B cell (primary cell): ENCODE measurements at regions of chr1 and their contacts with region 1.

Region 1: GRCh38 chr1:16440470-16441281 is at the start of gene NECAP2:
- DNase-seq: peak; percentile 94
- ATAC-seq: peak; percentile 89
- H3K4me3 ChIP-seq: peak within 1 kb of the TSS; percentile 34 to 100 (median 95)
- H3K4me3 Mint-ChIP-seq: peak within 1 kb of the TSS; percentile 93
- H3K27ac ChIP-seq: peak within 1 kb of the TSS; percentile 97 to 98
- H3K27ac Mint-ChIP-seq: peak within 1 kb of the TSS; percentile 91
- H3K4me1 ChIP-seq: peaks cover 16 to 29% of the 10 kb centered on the region in 2 donors
- H3K4me1 Mint-ChIP-seq: peaks cover 28% of the 10 kb centered on the region
- H3K27me3 ChIP-seq: no peaks in the 10 kb centered on the region
- H3K27me3 Mint-ChIP-seq: no peaks in the 10 kb centered on the region
- CTCF ChIP-seq: peak; percentile 92
- total RNA-seq, gene NECAP2: 77.3 and 78.5 TPM in 2 replicates

Region 2: DNA sequence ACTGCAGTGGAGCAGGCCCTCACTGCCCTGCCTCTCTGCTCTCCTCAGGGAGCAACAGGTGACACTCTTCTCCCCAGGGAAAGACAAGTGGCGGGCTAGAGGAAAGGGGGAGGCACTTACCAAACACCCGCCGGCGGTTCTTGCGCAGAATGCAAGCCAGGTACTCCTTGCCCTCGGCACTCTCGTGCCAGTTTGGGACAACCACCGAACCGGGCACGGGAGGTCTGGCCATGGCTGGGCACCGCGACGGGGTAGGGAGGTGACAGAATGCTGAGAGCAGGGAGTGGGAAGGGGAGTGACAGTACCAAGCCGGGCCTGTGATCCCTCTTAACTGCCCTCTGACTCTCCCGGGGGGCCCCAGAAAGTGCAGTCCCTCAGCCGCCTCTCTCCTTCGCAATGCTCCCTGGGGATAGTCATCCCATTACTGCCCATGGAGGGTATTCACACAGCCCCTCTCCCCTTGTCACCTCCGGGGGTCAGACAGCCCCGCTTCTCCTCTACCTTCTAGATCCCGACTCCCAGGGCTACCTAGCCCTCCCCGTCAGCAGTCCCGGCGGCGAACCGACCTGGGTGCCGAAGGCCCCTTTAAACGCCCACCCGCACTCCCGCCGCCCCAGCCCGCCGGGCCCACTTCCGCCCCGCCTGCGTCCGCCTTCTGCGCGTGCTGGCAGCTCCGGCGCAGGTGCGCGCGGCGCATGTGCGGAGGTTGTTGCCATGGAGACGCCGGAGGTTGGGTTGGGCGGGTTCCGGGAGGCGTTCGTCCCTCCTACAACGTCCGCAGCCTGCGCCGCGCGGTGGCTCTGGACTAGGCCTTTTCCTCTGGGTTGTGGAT is 203.9 kb before region 1 on chr1 and contains the start of gene CPLANE2:
- CTCF ChIA-PET with region 1: no interaction called
- POLR2A ChIA-PET with region 1: no interaction called
- intact Hi-C with region 1: loop called (anchors 2 kb)
- DNase-seq: peak; percentile 97
- ATAC-seq: peak; percentile 79
- H3K4me3 ChIP-seq: peak within 1 kb of the TSS; percentile 55 to 98 (median 76)
- H3K4me3 Mint-ChIP-seq: peak within 1 kb of the TSS; percentile 85
- H3K27ac ChIP-seq: peak within 1 kb of the TSS; percentile 82 to 92
- H3K27ac Mint-ChIP-seq: peak within 1 kb of the TSS; percentile 96
- H3K4me1 ChIP-seq: peaks cover 12 to 17% of the 10 kb centered on the region in 2 donors
- H3K4me1 Mint-ChIP-seq: peaks cover 16% of the 10 kb centered on the region
- H3K27me3 ChIP-seq: no peaks in the 10 kb centered on the region
- H3K27me3 Mint-ChIP-seq: no peaks in the 10 kb centered on the region
- CTCF ChIP-seq: no peak
- total RNA-seq, gene CPLANE2: 11.1 and 14.3 TPM in 2 replicates

Region 3: DNA sequence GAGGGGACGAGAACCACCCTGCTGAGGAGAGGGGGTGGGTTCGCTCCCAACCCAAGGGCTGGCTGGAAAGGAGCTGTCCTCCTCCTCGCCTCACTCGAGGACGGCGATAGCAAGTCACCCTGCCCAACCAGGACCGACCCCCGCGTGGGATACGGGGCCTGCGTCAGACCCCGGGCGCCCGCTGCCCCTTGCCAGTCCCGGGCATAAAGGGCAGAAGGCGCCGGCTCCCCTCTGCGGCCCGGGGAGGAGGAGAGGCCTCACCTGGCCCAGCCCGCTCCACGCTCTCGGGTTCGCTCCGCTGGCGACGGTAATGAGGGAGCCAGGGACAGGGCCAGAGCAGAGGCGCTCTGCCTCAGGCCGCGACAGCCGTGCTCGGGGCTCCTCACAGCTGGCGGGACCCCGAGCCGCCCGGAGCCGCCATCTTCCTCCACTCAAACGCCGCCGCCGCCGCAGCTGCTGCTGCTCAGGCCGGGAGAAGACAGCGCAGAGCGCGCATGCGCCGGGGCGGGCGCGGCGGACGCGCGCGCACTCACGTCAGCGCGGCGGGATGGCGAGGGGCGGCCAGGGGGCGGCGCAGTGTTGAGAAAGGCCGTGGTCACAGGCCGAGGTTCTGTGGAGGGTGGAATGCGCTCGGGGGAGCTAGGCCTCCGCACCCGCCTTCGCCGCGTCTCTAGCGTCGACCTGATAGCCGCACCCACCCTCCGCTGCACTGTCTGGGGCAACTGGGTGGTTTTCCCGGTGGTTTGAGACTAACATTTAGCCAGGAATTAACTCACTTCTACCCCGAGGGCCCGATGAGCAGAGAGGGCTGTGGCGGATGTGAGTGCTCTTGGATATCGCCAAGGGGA is 88.5 kb before region 1 on chr1 and contains the start of gene FBXO42:
- CTCF ChIA-PET with region 1: interaction called, 7 read pairs
- POLR2A ChIA-PET with region 1: no interaction called
- intact Hi-C with region 1: loop called (anchors 5 kb)
- DNase-seq: peak; percentile 96
- ATAC-seq: peak; percentile 93
- H3K4me3 ChIP-seq: peak within 1 kb of the TSS; percentile 66 to 99 (median 81)
- H3K4me3 Mint-ChIP-seq: peak within 1 kb of the TSS; percentile 84
- H3K27ac ChIP-seq: peak within 1 kb of the TSS; percentile 87 to 90
- H3K27ac Mint-ChIP-seq: peak within 1 kb of the TSS; percentile 92
- H3K4me1 ChIP-seq: peaks cover 19 to 30% of the 10 kb centered on the region in 2 donors
- H3K4me1 Mint-ChIP-seq: peaks cover 23% of the 10 kb centered on the region
- H3K27me3 ChIP-seq: no peaks in the 10 kb centered on the region
- H3K27me3 Mint-ChIP-seq: no peaks in the 10 kb centered on the region
- CTCF ChIP-seq: peak; percentile 54
- total RNA-seq, gene FBXO42: 25.4 and 33.1 TPM in 2 replicates

Region 4: DNA sequence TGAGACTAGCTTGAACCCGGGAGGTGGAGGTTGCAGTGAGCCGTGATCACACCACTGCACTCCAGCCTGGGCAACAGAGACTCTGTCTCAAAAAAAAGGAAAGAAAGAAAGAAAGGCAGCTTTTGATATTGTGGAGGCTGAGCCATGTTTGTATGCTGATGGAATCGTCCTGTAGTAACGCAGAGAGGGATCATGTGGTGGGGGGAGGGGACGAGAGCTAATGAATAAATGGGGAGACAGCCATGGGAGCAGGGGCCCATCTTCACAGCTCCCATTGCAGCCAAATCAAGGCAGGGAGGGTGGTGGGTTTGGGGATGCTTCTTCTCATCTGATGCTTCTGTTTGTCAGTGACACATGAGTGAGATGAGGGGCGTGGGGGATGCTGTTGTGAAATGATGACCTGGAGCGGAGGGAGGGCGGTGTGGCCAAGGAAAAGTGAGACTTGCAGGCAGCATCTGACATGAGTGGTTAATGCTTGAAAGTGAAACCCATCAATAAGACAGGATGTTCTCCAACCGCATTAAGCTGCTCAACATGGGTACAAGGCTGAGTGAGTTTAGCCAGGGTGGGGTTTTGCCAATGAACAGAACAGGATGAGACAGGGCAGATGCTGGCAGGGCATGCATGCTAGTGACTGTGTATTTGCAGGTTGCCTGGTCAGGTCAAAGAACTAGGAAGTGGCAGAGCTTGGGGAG is 20.1 kb before region 1 on chr1:
- CTCF ChIA-PET with region 1: interaction called, 9 read pairs
- POLR2A ChIA-PET with region 1: interaction called, 3 read pairs
- intact Hi-C with region 1: loop called (anchors 1 kb)
- DNase-seq: peak; percentile 78
- ATAC-seq: peak; percentile 92
- H3K4me3 ChIP-seq: peak overlapping the region in 2 of 5 experiments; percentile 9 to 44
- H3K4me3 Mint-ChIP-seq: peak overlapping the region; percentile 57
- H3K27ac ChIP-seq: peak overlapping the region; percentile 25 to 74
- H3K27ac Mint-ChIP-seq: peak overlapping the region; percentile 91
- H3K4me1 ChIP-seq: peaks cover 19 to 26% of the 10 kb centered on the region in 2 donors
- H3K4me1 Mint-ChIP-seq: peaks cover 26% of the 10 kb centered on the region
- H3K27me3 ChIP-seq: no peaks in the 10 kb centered on the region
- H3K27me3 Mint-ChIP-seq: no peaks in the 10 kb centered on the region
- CTCF ChIP-seq: no peak

Region 5: GRCh38 chr1:16498573-16499413 is 58.1 kb after region 1 on chr1:
- CTCF ChIA-PET with region 1: interaction called, 3 read pairs
- POLR2A ChIA-PET with region 1: interaction called, 10 read pairs
- intact Hi-C with region 1: loop called (anchors 1 kb)
- DNase-seq: peak; percentile 92
- ATAC-seq: peak; percentile 96
- H3K4me3 ChIP-seq: peak overlapping the region; percentile 41 to 93 (median 77)
- H3K4me3 Mint-ChIP-seq: peak overlapping the region; percentile 89
- H3K27ac ChIP-seq: peak overlapping the region in 1 of 2 donors; percentile 26
- H3K27ac Mint-ChIP-seq: peak overlapping the region; percentile 71
- H3K4me1 ChIP-seq: peaks cover 0 to 23% of the 10 kb centered on the region in 2 donors
- H3K4me1 Mint-ChIP-seq: peaks cover 30% of the 10 kb centered on the region
- H3K27me3 ChIP-seq: no peaks in the 10 kb centered on the region
- H3K27me3 Mint-ChIP-seq: no peaks in the 10 kb centered on the region
- CTCF ChIP-seq: no peak

Region 6: DNA sequence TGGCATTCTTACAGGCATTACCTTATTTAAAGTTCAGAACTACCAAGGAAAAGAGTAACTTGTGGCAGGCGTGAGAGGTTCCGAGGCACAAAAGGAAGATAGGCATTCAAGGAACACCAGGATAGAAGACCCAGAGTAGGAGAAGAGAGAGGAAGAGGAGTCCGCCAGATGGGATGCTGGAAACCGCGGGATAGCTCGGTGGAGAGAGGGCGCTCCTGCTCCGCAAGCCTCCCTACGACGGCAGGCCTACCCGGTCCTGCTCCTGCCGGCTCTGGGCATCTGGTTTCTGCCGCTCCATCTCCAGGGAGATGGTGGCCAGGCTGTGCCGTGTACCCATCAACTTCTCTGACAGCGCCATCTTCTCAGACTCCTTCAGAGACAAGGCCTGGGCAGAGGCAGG is 178.0 kb after region 1 on chr1:
- CTCF ChIA-PET with region 1: interaction called, 4 read pairs
- POLR2A ChIA-PET with region 1: no interaction called
- intact Hi-C with region 1: loop called (anchors 2 kb)
- DNase-seq: peak; percentile 44
- ATAC-seq: no peak
- H3K4me3 ChIP-seq: no peak overlapping the region
- H3K4me3 Mint-ChIP-seq: no peak overlapping the region
- H3K27ac ChIP-seq: no peak overlapping the region
- H3K27ac Mint-ChIP-seq: no peak overlapping the region
- H3K4me1 ChIP-seq: peaks cover 7 to 8% of the 10 kb centered on the region in 2 donors
- H3K4me1 Mint-ChIP-seq: no peaks in the 10 kb centered on the region
- H3K27me3 ChIP-seq: peaks cover 0 to 8% (median 1%) of the 10 kb centered on the region in 4 experiments
- H3K27me3 Mint-ChIP-seq: no peaks in the 10 kb centered on the region
- CTCF ChIP-seq: no peak